ENCODE measurements at regions of chr13 and their contacts with region 1.

Region 1: GRCh38 chr13:98285317-98285716 is 108.2 kb upstream of the RNF113B start:
- DNase-seq: no peak
- H3K4me3 ChIP-seq: no peak overlapping the region
- H3K27ac ChIP-seq: no peak overlapping the region
- H3K4me1 ChIP-seq: no peaks in the 10 kb centered on the region
- H3K27me3 ChIP-seq: no peaks in the 10 kb centered on the region
- CTCF ChIP-seq: no peak

Region 2: GRCh38 chr13:98239162-98240076 is 45.9 kb before region 1 on chr13:
- CTCF ChIA-PET with region 1: no interaction called
- dilution Hi-C with region 1: loop called (anchors 5 kb)
- in situ Hi-C with region 1: no loop called
- intact Hi-C with region 1: no loop called
- DNase-seq: no peak
- H3K4me3 ChIP-seq: no peak overlapping the region
- H3K27ac ChIP-seq: no peak overlapping the region
- H3K4me1 ChIP-seq: no peaks in the 10 kb centered on the region
- H3K27me3 ChIP-seq: no peaks in the 10 kb centered on the region
- CTCF ChIP-seq: no peak

Region 3: DNA sequence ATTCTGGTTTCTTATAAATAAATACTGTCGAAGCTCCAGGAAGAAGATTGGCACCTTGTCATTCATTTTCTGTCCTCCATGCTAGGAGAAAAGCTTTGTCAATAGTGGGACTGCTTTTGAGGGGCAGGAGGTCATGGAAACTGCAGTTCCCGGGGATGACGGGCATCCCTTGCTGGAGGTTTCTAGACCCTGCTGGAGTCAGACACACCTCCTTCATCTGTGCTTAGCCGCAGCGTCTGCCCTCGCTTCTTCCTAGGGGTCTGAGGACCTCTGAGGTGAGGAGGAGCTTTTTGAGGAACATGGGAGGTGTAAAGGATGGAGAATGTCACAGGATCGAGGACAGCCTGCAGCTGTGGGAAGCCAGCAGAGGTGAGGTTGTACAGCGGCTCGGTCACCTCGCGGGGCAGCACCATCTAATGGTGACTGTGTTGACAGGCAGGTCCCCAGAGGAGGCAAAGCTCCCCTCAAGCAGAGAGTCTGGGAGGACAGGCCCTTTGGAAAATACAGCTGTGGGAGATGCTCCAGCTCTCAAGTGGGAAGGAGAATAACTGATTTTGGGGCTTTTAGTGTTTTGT is 64.5 kb after region 1 on chr13:
- CTCF ChIA-PET with region 1: no interaction called
- dilution Hi-C with region 1: loop called (anchors 5 kb)
- in situ Hi-C with region 1: no loop called
- intact Hi-C with region 1: no loop called
- DNase-seq: no peak
- H3K4me3 ChIP-seq: no peak overlapping the region
- H3K27ac ChIP-seq: no peak overlapping the region
- H3K4me1 ChIP-seq: no peaks in the 10 kb centered on the region
- H3K27me3 ChIP-seq: no peaks in the 10 kb centered on the region
- CTCF ChIP-seq: no peak

Measured in mammary epithelial cell (primary cell).